Dendritic cell treated with granulocyte-macrophage colony-stimulating factor and Interleukin-4, amounts not matched to agents 40 ng/mL and 50 ng/mL, for 4 days (primary cell): ENCODE measurements at regions of chr11 and their contacts with region 1.

Region 1: GRCh38 chr11:33324302-33324985 is 67.3 kb downstream of the HIPK3 start:
- H3K4me3 Mint-ChIP-seq: no peak overlapping the region
- H3K27ac Mint-ChIP-seq: peak overlapping the region; percentile 2
- H3K4me1 Mint-ChIP-seq: peaks cover 32% of the 10 kb centered on the region
- H3K27me3 Mint-ChIP-seq: no peaks in the 10 kb centered on the region

Region 2: GRCh38 chr11:33065445-33066178 is 258.8 kb before region 1 on chr11:
- intact Hi-C with region 1: no loop called
- H3K4me3 Mint-ChIP-seq: no peak overlapping the region
- H3K27ac Mint-ChIP-seq: no peak overlapping the region
- H3K4me1 Mint-ChIP-seq: peaks cover 40% of the 10 kb centered on the region
- H3K27me3 Mint-ChIP-seq: no peaks in the 10 kb centered on the region

Region 3: DNA sequence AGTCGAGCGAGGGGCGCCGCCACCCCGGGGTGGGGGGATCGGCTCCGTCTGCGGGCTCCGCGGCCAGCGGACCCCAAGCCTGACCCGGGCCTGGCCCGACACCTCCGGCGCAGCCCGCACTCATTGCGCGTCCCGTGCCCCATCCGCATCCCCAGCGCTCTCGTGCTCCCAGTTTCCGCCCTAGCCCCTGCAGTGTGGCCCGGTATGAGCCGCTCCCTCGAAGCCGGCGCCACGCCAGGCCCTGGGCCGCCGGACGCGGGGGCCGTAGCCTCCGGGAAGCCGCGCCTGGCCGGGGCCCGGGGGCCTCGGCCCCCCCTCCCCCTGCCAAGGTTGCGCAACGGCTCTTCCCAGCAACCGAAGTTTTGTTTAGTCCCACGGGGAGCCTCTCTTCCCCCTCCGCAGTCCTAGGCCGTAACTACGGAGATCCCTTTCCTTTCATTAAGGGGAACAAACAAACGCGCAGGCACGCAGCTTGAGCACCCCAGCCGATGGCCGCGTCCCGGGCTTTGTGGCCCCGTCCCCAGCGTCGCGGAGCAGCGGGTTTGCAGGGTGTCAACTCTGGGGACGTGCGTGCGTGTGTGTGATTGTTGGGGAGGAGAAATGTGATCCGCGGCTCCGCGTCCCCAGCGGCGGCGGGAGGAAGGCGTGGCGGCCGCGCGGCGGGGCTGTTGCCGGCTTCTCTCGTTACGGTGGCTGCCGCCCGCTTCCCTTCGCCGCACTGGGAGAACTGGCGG is 66.4 kb before region 1 on chr11:
- intact Hi-C with region 1: loop called (anchors 5 kb)
- H3K4me3 Mint-ChIP-seq: peak overlapping the region; percentile 88
- H3K27ac Mint-ChIP-seq: peak overlapping the region; percentile 93
- H3K4me1 Mint-ChIP-seq: peaks cover 51% of the 10 kb centered on the region
- H3K27me3 Mint-ChIP-seq: no peaks in the 10 kb centered on the region

Region 4: DNA sequence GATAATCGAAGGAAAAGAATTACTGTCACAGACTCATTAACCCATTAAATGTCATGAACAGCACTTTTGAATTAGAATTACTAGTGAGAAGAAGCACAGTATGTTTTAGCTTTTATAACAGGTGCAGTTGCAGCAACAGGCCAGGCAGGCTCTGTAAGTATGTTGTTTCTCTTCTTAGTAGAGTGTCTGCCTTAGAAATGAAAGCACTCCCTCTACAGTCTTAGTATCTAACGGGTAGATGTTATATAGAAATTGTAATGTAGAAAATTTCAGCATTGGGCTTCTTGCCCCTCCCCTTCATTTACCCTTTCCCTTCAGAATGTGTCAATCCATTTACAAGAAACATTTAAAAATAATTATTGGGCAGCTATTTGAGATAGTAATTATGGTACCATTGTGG is 20.2 kb after region 1 on chr11:
- intact Hi-C with region 1: no loop called
- H3K4me3 Mint-ChIP-seq: no peak overlapping the region
- H3K27ac Mint-ChIP-seq: no peak overlapping the region
- H3K4me1 Mint-ChIP-seq: no peaks in the 10 kb centered on the region
- H3K27me3 Mint-ChIP-seq: no peaks in the 10 kb centered on the region

Region 5: DNA sequence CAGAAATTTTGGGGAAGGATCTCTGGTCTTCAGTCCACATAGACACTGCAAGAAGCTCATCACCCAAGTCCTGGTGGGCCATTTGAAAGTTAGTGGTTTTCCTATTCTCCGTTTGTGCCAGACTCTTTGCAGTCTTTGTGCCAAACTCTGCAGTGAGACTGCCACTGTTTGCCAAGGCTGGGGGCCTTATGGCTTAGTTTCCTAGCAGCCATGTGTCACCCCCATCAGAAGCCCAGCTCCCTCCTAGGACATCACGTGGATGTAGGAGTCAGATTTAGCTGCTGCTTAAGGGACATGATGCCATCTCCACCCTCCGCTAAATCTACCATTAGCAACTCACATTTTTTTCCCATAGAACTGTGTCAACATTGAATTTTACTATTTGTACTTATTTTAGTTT is 156.2 kb after region 1 on chr11:
- intact Hi-C with region 1: no loop called
- H3K4me3 Mint-ChIP-seq: no peak overlapping the region
- H3K27ac Mint-ChIP-seq: no peak overlapping the region
- H3K4me1 Mint-ChIP-seq: no peaks in the 10 kb centered on the region
- H3K27me3 Mint-ChIP-seq: peaks cover 16% of the 10 kb centered on the region